ENCODE measurements at regions of chr12 and their contacts with region 1.

Region 1: DNA sequence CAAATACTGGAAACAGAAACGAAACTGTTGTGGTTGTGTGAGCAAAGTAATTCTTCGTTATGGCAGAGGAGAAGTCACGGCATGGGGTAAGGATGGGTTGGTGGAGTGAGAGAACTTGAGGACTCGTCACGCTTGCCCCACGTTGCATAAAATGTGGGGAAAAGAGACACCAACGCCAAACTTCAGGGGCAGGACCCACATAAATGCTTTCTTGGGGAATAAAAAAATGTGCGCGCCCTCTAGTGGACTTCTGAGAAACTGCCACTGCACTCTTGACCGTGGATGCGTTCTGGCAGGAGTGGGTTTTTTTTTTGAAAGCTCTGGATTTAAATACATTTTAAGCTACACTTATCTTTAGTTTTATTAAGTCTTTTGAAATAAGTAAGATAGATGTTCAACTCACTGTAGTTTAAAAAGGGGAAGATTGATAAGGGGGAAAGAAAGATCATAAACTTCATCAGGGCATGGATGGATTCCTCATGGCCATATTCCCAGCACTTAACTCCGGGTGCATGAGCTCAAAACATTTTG is 4.1 kb upstream of the IGF1 start:
- DNase-seq: peak; percentile 84
- ATAC-seq: peak; percentile 80
- H3K4me3 ChIP-seq: peak overlapping the region; percentile 48
- H3K27ac ChIP-seq: peak overlapping the region; percentile 100
- H3K4me1 ChIP-seq: peaks cover 54% of the 10 kb centered on the region
- H3K27me3 ChIP-seq: no peaks in the 10 kb centered on the region
- CTCF ChIP-seq: peak; percentile 79 to 91 (median 81)
- EP300 ChIP-seq: peak; percentile 87 to 90; a peak in 3 of 4 replicates
- POLR2A ChIP-seq: peak; percentile 43; the same call in 1 of the 2 replicates
- RAD21 ChIP-seq: peak; percentile 80

Region 2: GRCh38 chr12:101919447-101919846 is 565.0 kb before region 1 on chr12:
- CTCF ChIA-PET with region 1: interaction called, 8 read pairs
- POLR2A ChIA-PET with region 1: no interaction called
- RAD21 ChIA-PET with region 1: interaction called, 4 read pairs
- SMC1A ChIA-PET with region 1: interaction called, 3 read pairs
- in situ Hi-C with region 1: no loop called
- intact Hi-C with region 1: loop called (anchors 5 kb)
- DNase-seq: no peak
- ATAC-seq: no peak
- H3K4me3 ChIP-seq: no peak overlapping the region
- H3K27ac ChIP-seq: no peak overlapping the region
- H3K4me1 ChIP-seq: peaks cover 26% of the 10 kb centered on the region
- H3K27me3 ChIP-seq: no peaks in the 10 kb centered on the region
- CTCF ChIP-seq: no peak
- EP300 ChIP-seq: no peak
- POLR2A ChIP-seq: no peak
- RAD21 ChIP-seq: no peak

Region 3: GRCh38 chr12:102119674-102120563 is 364.6 kb before region 1 on chr12 and contains the starts of genes NUP37 and PARPBP:
- CTCF ChIA-PET with region 1: interaction called, 8 read pairs
- POLR2A ChIA-PET with region 1: no interaction called
- RAD21 ChIA-PET with region 1: interaction called, 6 read pairs
- SMC1A ChIA-PET with region 1: interaction called, 9 read pairs
- in situ Hi-C with region 1: no loop called
- intact Hi-C with region 1: loop called (anchors 5 kb)
- DNase-seq: peak; percentile 68
- ATAC-seq: peak; percentile 95
- H3K4me3 ChIP-seq: peak within 1 kb of the TSS; percentile 88
- H3K27ac ChIP-seq: peak within 1 kb of the TSS; percentile 86
- H3K4me1 ChIP-seq: no peaks in the 10 kb centered on the region
- H3K27me3 ChIP-seq: no peaks in the 10 kb centered on the region
- CTCF ChIP-seq: peak in 1 of 3 experiments; percentile 8; a peak in 1 of 6 replicates
- EP300 ChIP-seq: 0 out of 4 replicates have a peak, but pooled peaks of 1 of the 2 experiments have one; percentile 6
- POLR2A ChIP-seq: peak; percentile 95
- RAD21 ChIP-seq: no peak
- polyA plus RNA-seq, gene NUP37: 191 to 250 TPM
- polyA plus RNA-seq, gene PARPBP: 29.2 to 40.3 TPM

Region 4: GRCh38 chr12:102372087-102372486 is 112.4 kb before region 1 on chr12:
- CTCF ChIA-PET with region 1: no interaction called
- POLR2A ChIA-PET with region 1: no interaction called
- RAD21 ChIA-PET with region 1: interaction called, 11 read pairs
- SMC1A ChIA-PET with region 1: interaction called, 5 read pairs
- in situ Hi-C with region 1: no loop called
- intact Hi-C with region 1: no loop called
- DNase-seq: no peak
- ATAC-seq: no peak
- H3K4me3 ChIP-seq: no peak overlapping the region
- H3K27ac ChIP-seq: no peak overlapping the region
- H3K4me1 ChIP-seq: no peaks in the 10 kb centered on the region
- H3K27me3 ChIP-seq: no peaks in the 10 kb centered on the region
- CTCF ChIP-seq: no peak
- EP300 ChIP-seq: no peak
- POLR2A ChIP-seq: no peak
- RAD21 ChIP-seq: no peak

Region 5: GRCh38 chr12:102433304-102433703 is 51.2 kb before region 1 on chr12:
- CTCF ChIA-PET with region 1: no interaction called
- POLR2A ChIA-PET with region 1: no interaction called
- RAD21 ChIA-PET with region 1: no interaction called
- SMC1A ChIA-PET with region 1: no interaction called
- in situ Hi-C with region 1: no loop called
- intact Hi-C with region 1: no loop called
- DNase-seq: no peak
- ATAC-seq: no peak
- H3K4me3 ChIP-seq: no peak overlapping the region
- H3K27ac ChIP-seq: no peak overlapping the region
- H3K4me1 ChIP-seq: no peaks in the 10 kb centered on the region; the same call in 1 of the 2 replicates
- H3K27me3 ChIP-seq: no peaks in the 10 kb centered on the region
- CTCF ChIP-seq: no peak
- EP300 ChIP-seq: no peak
- POLR2A ChIP-seq: no peak
- RAD21 ChIP-seq: no peak

Region 6: DNA sequence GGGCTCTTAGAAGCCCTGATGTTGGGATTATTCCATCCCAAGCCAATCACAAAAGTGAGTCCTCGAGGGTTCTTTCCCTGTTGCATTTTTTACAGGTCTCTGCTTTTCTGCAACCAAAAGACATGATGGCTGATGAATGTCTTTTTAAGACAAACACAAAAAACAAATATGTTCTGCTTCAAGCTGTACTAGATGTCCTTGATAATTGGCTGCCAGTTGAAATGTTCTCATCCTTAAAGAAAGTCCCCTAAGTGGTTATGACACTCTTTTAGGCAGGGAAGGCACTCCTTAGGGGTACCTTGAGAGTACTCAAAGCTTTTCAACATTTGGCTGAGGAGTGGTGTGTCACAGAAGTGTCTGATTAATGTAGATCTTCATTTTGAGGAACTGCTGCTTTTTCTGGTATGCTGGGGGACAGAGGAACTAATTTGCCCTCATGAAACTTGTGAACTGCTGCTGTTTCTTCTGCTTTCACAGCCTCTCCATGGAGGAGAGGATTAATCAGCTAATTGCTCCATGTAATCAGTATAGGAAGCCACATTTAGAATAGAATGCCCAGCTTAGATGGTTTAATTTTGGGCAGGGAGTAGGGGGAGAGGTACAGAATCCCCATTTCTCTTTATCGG is 18.7 kb after region 1 on chr12:
- CTCF ChIA-PET with region 1: interaction called, 11 read pairs
- POLR2A ChIA-PET with region 1: interaction called, 6 read pairs
- RAD21 ChIA-PET with region 1: interaction called, 17 read pairs
- SMC1A ChIA-PET with region 1: interaction called, 6 read pairs
- in situ Hi-C with region 1: no loop called
- intact Hi-C with region 1: loop called (anchors 1 kb)
- DNase-seq: peak; percentile 55
- ATAC-seq: peak; percentile 95
- H3K4me3 ChIP-seq: no peak overlapping the region; the same call in 1 of the 2 replicates
- H3K27ac ChIP-seq: peak overlapping the region; percentile 32; the same call in 1 of the 2 replicates
- H3K4me1 ChIP-seq: peaks cover 13% of the 10 kb centered on the region; the same call in 1 of the 2 replicates
- H3K27me3 ChIP-seq: no peaks in the 10 kb centered on the region
- CTCF ChIP-seq: no peak
- EP300 ChIP-seq: peak in 1 of 2 experiments; percentile 54; a peak in 1 of 4 replicates
- POLR2A ChIP-seq: no peak
- RAD21 ChIP-seq: no peak

Region 7: DNA sequence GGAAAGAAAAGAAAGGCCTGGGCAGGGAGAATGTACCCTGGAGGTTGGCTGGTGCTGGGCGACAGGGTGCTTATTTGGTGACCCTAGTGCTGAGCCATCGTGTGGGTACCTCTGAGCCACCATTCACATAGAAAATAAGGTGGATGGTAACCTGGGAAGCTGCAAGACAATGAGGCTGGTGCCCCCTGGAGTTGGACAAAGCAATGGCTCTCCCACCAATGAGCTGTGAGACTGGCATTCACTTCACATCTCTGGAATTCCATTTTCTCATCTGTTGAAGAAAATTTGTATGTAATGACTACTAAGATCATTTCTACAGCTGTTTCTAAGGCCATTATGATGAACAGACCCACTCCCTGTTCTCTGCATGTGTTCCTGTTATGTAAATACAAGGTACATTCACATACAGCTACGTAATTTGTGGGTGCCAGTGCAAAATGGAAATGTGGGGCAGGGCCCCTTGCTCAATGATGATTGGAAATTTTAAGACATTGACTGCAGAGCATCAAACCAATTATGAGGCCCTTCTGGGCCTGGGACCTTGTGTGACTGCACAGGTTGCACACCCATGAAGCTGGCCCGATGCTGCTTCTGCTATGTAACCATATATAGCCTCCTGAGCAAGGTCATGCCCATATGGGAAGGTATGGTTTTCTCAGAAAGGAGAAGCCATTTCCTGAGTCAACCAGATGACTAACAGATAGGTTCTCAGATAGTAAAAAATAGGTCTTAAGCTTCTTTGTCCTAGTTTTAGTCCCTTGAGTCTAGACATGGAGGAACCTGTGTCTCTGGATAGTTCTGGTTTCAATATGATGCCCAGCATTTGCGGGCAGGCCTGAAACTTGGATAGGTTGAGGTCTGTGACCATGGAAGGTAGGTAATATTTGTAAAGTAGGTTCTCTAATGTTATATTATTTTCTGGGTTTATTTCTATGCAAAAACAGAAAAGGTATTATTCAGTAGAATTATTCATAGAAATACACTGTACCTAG is 59.3 kb after region 1 on chr12:
- CTCF ChIA-PET with region 1: interaction called, 28 read pairs
- POLR2A ChIA-PET with region 1: no interaction called
- RAD21 ChIA-PET with region 1: interaction called, 10 read pairs
- SMC1A ChIA-PET with region 1: interaction called, 6 read pairs
- in situ Hi-C with region 1: no loop called
- intact Hi-C with region 1: no loop called
- DNase-seq: no peak
- ATAC-seq: peak; percentile 80
- H3K4me3 ChIP-seq: no peak overlapping the region
- H3K27ac ChIP-seq: no peak overlapping the region
- H3K4me1 ChIP-seq: peaks cover 6% of the 10 kb centered on the region
- H3K27me3 ChIP-seq: no peaks in the 10 kb centered on the region
- CTCF ChIP-seq: peak; percentile 42 to 46 (median 45); a peak in 5 of 6 replicates
- EP300 ChIP-seq: no peak
- POLR2A ChIP-seq: no peak
- RAD21 ChIP-seq: peak; percentile 62

Region 8: DNA sequence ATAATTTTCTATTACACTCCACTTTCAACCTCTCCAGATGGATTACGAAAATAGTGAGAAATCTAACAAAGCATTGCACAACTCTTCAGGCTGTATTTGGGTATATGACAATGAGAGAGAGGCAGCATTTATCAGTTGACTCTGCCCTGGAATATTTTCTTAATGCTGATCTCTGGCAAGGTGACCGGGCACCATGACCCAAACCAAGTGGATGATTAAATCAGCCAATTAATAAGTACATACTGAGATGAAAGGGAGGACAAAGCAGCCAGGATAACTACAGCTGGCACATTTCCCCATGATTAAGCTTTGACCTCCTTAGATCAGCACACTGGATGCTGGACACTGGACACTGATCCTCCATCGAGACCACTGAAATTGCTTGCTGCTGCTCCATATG is 691.1 kb after region 1 on chr12:
- CTCF ChIA-PET with region 1: no interaction called
- POLR2A ChIA-PET with region 1: no interaction called
- RAD21 ChIA-PET with region 1: no interaction called
- SMC1A ChIA-PET with region 1: no interaction called
- in situ Hi-C with region 1: no loop called
- intact Hi-C with region 1: no loop called
- DNase-seq: no peak
- ATAC-seq: no peak
- H3K4me3 ChIP-seq: no peak overlapping the region
- H3K27ac ChIP-seq: no peak overlapping the region
- H3K4me1 ChIP-seq: no peaks in the 10 kb centered on the region
- H3K27me3 ChIP-seq: no peaks in the 10 kb centered on the region
- CTCF ChIP-seq: no peak
- EP300 ChIP-seq: no peak
- POLR2A ChIP-seq: no peak
- RAD21 ChIP-seq: no peak